ENCODE measurements at regions of chr1 and their contacts with region 1.

Region 1: GRCh38 chr1:17405898-17406759 is 33.3 kb downstream of the RCC2 start:
- H3K4me3 Mint-ChIP-seq: no peak overlapping the region
- H3K27ac Mint-ChIP-seq: no peak overlapping the region
- H3K4me1 Mint-ChIP-seq: peaks cover 5% of the 10 kb centered on the region
- H3K27me3 Mint-ChIP-seq: peaks cover 2% of the 10 kb centered on the region

Region 2: DNA sequence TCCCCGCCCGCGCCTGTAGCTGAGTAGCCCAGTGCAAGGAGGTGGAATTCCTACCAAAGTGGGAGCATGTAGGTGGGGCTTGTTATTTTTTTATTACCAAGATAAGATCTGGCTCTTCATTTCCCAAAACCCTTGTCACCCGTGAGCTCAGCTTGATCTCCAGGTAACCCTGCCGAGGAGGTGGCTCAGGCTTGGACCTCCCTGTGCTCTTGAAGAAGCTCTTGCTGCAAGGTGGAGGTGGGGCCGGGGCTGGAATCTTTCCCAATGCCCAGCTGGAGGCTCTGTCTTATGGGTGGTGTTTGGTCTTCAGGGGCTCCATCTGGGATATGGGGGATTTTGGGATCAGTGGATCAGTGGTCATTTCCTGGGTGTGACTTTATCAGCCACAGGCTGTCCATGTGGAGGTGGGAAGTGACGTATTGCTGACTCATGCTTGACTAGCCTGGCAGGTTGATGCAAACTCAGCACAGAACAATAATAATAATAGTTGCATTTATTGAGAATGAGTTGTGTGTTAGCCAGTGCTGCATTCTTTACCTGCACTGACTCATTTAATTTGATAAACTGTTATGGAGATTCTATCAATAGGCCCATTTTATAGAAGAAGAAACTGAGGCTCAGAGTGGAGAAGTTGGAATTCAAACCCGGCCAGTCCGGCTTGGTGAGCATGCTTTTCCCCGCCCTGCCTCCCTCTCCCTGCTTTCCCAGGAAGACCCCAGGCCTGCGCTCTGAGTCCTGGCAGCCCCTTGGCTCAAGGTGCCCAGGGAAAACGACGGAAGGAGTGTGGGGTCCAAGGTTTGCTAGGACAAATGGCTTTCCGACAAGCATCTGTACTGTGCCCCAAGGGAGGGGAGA is 57.8 kb before region 1 on chr1:
- intact Hi-C with region 1: loop called (anchors 10 kb)
- H3K4me3 Mint-ChIP-seq: no peak overlapping the region
- H3K27ac Mint-ChIP-seq: no peak overlapping the region
- H3K4me1 Mint-ChIP-seq: peaks cover 13% of the 10 kb centered on the region
- H3K27me3 Mint-ChIP-seq: no peaks in the 10 kb centered on the region